ENCODE measurements at regions of chr17 and their contacts with region 1.

Region 1: DNA sequence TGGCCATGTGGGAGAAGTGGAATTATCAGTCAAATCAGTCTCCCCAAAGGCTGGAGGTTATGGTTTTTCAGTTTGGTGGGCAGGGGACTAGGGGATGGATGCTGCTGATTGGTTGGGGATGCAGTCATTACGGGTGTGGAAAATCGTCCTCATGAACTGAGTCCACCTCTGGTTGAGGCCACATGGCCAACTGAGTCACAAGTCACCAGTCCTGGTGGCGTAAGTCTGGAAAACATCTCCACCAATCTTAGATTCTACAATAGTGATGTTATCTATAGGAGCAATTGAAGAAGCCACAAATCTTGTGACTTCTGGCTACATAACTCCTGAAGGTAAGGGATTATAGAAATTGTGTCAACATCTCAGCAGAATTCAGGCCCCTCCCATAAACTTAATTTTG is 5.2 kb upstream of the RNF135 start:
- DNase-seq: peak in 1 of 2 donors; percentile 8
- ATAC-seq: no peak
- H3K4me3 ChIP-seq: no peak overlapping the region
- H3K27ac ChIP-seq: no peak overlapping the region
- H3K4me1 ChIP-seq: no peaks in the 10 kb centered on the region
- H3K27me3 ChIP-seq: no peaks in the 10 kb centered on the region
- CTCF ChIP-seq: no peak

Region 2: DNA sequence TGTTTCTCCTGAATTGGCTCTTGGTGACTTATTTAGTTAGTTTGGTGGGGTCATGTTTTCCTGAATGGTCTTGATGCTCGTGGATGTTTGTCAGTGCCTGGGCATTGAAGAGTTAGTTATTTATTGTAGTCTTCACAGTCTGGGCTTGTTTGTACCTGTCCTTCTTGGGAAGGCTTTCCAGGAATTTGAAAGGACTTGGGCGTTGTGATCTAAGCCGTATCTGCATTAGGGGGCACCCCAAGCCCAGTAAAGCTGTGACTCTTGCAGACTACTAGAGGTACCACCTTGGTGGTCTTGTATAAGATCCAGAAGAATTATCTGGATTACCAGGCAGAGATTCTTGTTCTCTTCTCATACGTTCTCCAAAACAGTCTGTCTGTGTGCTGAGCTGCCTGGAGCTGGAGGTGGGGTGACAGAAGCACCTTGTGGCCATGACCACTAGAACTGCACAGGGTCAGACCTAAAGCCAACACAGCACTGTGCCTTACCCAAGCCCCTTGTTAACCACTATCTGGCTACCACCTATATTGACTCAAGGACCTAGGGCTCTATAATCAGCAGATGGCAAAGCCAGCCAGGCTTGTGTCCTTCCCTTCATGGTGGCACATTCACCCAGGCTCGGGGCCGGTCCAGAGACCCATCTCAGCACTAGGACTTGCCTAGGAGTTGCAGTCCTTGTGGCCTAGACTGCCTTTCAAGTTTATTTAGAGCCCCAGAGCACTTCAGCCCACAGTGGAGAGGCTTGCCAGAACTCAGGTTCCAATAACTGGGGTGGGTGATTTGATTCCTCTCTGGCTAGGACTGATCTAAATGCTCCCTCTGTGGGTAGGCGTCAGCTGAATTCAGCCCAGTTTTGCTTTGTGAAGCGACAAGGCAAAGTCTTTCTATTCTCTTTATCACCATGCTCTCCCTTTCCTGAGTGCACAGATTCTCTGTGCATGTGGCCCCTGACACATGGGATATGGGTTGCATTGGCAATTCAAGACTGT is 16.1 kb after region 1 on chr17:
- intact Hi-C with region 1: loop called in 1 of 2 experiments (anchors 2 kb)
- DNase-seq: no peak
- ATAC-seq: no peak
- H3K4me3 ChIP-seq: no peak overlapping the region
- H3K27ac ChIP-seq: no peak overlapping the region
- H3K4me1 ChIP-seq: no peaks in the 10 kb centered on the region
- H3K27me3 ChIP-seq: no peaks in the 10 kb centered on the region
- CTCF ChIP-seq: no peak

Measured in psoas muscle (tissue), 8 donors.